Breast epithelium (tissue), 4 donors: ENCODE measurements at regions of chr3 and their contacts with region 1.

Region 1: GRCh38 chr3:181230258-181230657 is 240.7 kb upstream of the DNAJC19 start:
- DNase-seq: no peak
- H3K4me3 ChIP-seq: no peak overlapping the region
- H3K27ac ChIP-seq: no peak overlapping the region
- H3K4me1 ChIP-seq: no peaks in the 10 kb centered on the region
- H3K27me3 ChIP-seq: no peaks in the 10 kb centered on the region
- CTCF ChIP-seq: no peak
- POLR2A ChIP-seq: no peak

Region 2: GRCh38 chr3:181210275-181210674 is 20.0 kb before region 1 on chr3:
- intact Hi-C with region 1: no loop called
- DNase-seq: no peak
- H3K4me3 ChIP-seq: no peak overlapping the region
- H3K27ac ChIP-seq: no peak overlapping the region
- H3K4me1 ChIP-seq: no peaks in the 10 kb centered on the region
- H3K27me3 ChIP-seq: no peaks in the 10 kb centered on the region
- CTCF ChIP-seq: no peak
- POLR2A ChIP-seq: no peak

Region 3: DNA sequence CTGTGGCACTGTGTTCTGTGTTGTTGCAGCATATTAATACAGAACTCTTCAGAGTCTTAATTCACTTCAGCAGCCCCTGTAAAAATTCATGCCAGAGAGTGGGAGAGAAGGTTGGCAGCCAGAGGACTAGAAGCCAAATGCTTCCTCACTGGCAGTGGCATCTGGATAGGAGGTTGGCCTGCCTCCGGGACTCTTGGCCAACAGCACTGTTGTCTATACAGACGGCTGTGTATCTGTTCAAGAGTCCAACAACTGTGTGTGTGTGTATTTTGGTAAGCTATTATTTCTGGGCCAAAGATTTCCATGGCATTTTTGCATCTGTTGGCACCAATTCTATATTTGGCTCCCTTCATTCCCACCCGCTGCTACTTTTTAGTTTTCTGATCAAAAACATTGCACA is 325.4 kb after region 1 on chr3:
- intact Hi-C with region 1: no loop called
- DNase-seq: no peak
- H3K4me3 ChIP-seq: no peak overlapping the region
- H3K27ac ChIP-seq: no peak overlapping the region
- H3K4me1 ChIP-seq: no peaks in the 10 kb centered on the region
- H3K27me3 ChIP-seq: no peaks in the 10 kb centered on the region
- CTCF ChIP-seq: no peak
- POLR2A ChIP-seq: no peak

Region 4: DNA sequence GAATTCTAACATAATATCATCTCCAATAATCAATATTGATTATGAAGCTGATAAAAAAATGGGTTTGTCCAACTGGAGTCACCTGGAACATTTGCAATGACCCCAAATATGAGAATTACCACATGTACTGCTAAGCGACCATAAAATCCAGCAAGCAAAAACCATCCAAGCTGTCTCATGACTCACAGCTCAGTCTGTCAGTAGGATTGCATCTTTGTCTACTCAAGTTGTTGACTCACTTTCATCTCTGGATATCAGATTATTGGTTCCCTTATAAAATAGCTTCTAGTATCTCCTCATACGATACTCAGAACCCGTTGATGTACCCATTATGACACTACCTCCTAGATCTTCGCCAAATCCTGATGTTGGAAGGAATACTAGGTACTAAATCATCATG is 1353.3 kb after region 1 on chr3:
- intact Hi-C with region 1: loop called (anchors 10 kb)
- DNase-seq: no peak
- H3K4me3 ChIP-seq: no peak overlapping the region
- H3K27ac ChIP-seq: no peak overlapping the region
- H3K4me1 ChIP-seq: no peaks in the 10 kb centered on the region
- H3K27me3 ChIP-seq: no peaks in the 10 kb centered on the region
- CTCF ChIP-seq: no peak
- POLR2A ChIP-seq: no peak

Region 5: DNA sequence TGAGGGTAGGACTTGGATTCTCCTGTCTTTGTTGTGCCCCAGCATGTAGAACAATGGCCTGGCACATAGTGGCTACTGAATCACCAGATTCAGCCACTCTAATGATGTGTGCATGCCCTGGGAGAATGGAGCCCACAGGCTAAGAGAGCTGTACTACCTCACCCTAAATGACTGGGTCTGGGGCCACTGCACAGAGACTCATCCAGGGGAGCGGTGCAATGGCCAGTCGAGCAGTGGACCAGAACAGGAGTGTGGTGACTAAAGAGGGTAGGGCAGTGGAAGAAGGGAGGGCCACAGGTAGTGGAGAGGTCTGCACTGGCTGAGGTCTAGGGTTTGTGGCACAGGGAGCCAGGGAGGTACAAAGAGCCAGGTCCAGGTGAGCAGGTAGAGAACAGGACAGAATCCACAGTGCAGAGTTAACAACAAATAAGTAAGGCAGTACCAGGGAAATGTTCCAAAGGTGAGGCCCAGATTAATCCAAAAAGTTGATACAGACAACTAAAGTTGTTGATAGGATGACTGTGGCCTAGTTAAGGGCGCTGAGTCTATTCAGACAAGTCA is 1420.4 kb after region 1 on chr3:
- intact Hi-C with region 1: loop called (anchors 10 kb)
- DNase-seq: no peak
- H3K4me3 ChIP-seq: no peak overlapping the region
- H3K27ac ChIP-seq: no peak overlapping the region
- H3K4me1 ChIP-seq: no peaks in the 10 kb centered on the region
- H3K27me3 ChIP-seq: no peaks in the 10 kb centered on the region
- CTCF ChIP-seq: no peak
- POLR2A ChIP-seq: no peak